Gastrocnemius medialis (tissue), 4 donors: ENCODE measurements at regions of chr3 and their contacts with region 1.

Region 1: DNA sequence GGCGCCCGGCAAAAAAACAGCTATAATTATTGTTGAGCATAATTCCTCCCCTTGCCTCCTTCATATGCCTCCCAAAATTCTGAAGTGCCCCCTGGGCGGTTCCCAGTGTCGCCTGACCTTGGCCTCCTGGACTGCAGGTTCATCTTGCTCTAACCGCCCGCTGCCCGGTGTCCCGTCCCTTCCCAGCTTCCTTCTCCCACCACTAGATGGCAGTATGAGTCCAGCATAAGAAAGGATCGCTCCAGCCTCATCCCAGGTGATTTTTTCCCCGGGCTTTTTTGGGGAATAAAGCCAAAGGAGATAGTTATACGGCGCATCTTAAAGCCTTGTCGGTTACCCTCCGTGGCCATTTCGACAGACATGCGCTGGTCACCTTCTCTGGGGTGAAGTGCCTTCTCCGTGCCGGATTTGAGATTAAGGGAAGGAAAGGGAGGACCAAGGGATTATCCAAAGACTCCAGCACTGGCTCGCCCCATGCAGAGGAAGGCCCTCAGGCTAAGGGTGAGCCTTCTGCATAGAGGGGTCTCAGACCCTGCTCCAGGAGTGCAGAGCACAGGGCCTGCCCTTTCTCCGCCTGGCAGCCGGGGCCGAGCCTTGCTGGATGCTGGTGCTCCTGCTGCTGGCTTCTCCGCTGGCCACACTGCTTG is 45.8 kb upstream of the TRA2B start:
- DNase-seq: peak; percentile 60 to 63
- ATAC-seq: peak; percentile 94 to 96
- H3K4me3 ChIP-seq: no peak overlapping the region
- H3K27ac ChIP-seq: no peak overlapping the region
- H3K4me1 ChIP-seq: no peaks in the 10 kb centered on the region
- H3K27me3 ChIP-seq: no peaks in the 10 kb centered on the region
- CTCF ChIP-seq: peak; percentile 84 to 96 (median 92)
- POLR2A ChIP-seq: no peak

Region 2: GRCh38 chr3:186259612-186260383 is 276.2 kb after region 1 on chr3:
- in situ Hi-C with region 1: no loop called
- intact Hi-C with region 1: loop called (anchors 5 kb)
- DNase-seq: peak; percentile 14 to 48
- ATAC-seq: peak; percentile 69 to 89
- H3K4me3 ChIP-seq: no peak overlapping the region
- H3K27ac ChIP-seq: no peak overlapping the region
- H3K4me1 ChIP-seq: no peaks in the 10 kb centered on the region
- H3K27me3 ChIP-seq: no peaks in the 10 kb centered on the region
- CTCF ChIP-seq: peak; percentile 40 to 86 (median 68)
- POLR2A ChIP-seq: no peak

Region 3: DNA sequence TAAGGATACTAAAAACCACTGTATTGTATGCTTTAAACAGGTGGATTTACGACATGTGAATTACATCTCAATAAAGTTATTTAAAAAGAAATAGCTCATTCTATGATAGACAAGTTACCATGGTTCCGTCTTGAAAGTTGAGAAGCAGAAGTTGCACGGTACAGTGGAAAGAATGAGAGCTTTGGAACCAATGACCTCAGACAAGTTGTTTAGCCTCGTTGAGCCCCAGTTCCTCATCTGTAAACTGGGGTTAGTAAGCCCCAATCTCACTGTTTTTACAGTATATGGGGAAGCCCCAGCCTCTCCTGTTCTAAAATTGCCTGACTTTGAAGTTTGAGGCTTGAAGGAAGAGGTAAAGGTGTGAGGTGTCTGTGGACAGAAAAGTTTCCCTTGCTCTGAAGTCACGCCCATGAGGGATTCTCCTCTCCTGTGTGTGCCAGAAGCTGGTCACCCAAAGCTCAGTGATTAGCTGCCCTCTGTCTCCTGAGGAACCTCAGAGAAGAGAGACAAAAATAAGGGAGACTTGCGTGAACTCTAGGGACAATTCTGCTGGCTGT is 550.6 kb after region 1 on chr3:
- in situ Hi-C with region 1: loop called in 2 of 4 experiments (anchors 5 to 10 kb)
- intact Hi-C with region 1: no loop called
- DNase-seq: no peak
- ATAC-seq: no peak
- H3K4me3 ChIP-seq: no peak overlapping the region
- H3K27ac ChIP-seq: no peak overlapping the region
- H3K4me1 ChIP-seq: no peaks in the 10 kb centered on the region
- H3K27me3 ChIP-seq: no peaks in the 10 kb centered on the region
- CTCF ChIP-seq: no peak
- POLR2A ChIP-seq: no peak

Region 4: DNA sequence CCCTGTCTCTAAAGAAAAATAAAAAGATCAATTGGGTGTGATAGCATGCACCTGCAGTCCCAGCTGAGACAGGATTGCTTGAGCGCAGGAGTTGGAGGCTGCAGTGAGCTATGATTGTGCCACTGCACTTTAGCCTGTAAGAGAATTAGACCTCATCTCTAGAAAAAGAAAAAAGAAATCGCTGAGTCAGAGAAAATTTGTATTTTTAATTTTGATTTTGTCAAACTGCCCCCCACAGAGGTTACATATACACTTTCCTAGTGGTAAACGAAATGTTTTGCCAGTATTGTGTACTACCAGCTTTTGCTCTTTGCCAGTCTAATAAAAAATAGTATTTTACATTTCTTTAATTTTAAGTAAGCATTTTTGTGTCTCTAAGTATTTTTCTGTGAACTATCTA is 565.9 kb after region 1 on chr3:
- in situ Hi-C with region 1: loop called in 2 of 4 experiments (anchors 5 to 10 kb)
- intact Hi-C with region 1: no loop called
- DNase-seq: no peak
- ATAC-seq: no peak
- H3K4me3 ChIP-seq: no peak overlapping the region
- H3K27ac ChIP-seq: no peak overlapping the region
- H3K4me1 ChIP-seq: no peaks in the 10 kb centered on the region
- H3K27me3 ChIP-seq: no peaks in the 10 kb centered on the region
- CTCF ChIP-seq: no peak
- POLR2A ChIP-seq: no peak